GM12878 (cell line): ENCODE measurements at regions of chr2 and their contacts with region 1.

Region 1: DNA sequence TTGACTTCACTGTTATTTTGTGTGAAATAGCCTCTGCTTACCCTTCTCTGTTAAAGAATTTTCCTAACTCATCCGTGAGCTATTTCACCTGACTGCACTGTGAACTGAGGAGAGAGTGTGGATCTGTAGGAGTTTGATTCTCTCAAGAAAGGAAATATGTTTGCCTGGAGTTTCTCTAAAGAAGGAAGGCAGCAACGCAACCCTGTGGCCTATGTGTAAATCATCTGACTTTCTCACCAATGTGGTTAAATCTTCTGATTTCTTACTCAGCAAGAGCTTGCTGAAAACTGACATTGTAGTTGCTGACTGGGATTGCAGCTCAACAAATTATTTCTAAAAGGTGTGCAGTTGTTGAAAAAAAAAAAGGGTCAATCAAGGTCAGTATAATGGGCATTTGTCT is 153.9 kb upstream of the PELI1 start:
- DNase-seq: no peak
- ATAC-seq: no peak
- H3K4me3 ChIP-seq: no peak overlapping the region
- H3K27ac ChIP-seq: no peak overlapping the region
- H3K4me1 ChIP-seq: peaks cover 14% of the 10 kb centered on the region
- H3K27me3 ChIP-seq: no peaks in the 10 kb centered on the region
- CTCF ChIP-seq: no peak
- EP300 ChIP-seq: no peak
- POLR2A ChIP-seq: no peak
- RAD21 ChIP-seq: no peak

Region 2: GRCh38 chr2:64260817-64261216 is 37.3 kb before region 1 on chr2:
- CTCF ChIA-PET with region 1: interaction called, 4 read pairs
- POLR2A ChIA-PET with region 1: interaction called, 6 read pairs
- RAD21 ChIA-PET with region 1: interaction called, 7 read pairs
- SMC1A ChIA-PET with region 1: interaction called, 13 read pairs
- in situ Hi-C with region 1: no loop called
- intact Hi-C with region 1: no loop called
- DNase-seq: peak; percentile 75
- ATAC-seq: peak; percentile 99
- H3K4me3 ChIP-seq: peak overlapping the region; percentile 31; the same call in 1 of the 2 replicates
- H3K27ac ChIP-seq: peak overlapping the region; percentile 75
- H3K4me1 ChIP-seq: peaks cover 10% of the 10 kb centered on the region
- H3K27me3 ChIP-seq: no peaks in the 10 kb centered on the region
- CTCF ChIP-seq: no peak
- EP300 ChIP-seq: peak; percentile 35 to 77; a peak in 3 of 4 replicates
- POLR2A ChIP-seq: no peak
- RAD21 ChIP-seq: no peak

Region 3: GRCh38 chr2:64318476-64318748 is 20.3 kb after region 1 on chr2:
- CTCF ChIA-PET with region 1: interaction called, 77 read pairs
- POLR2A ChIA-PET with region 1: interaction called, 8 read pairs
- RAD21 ChIA-PET with region 1: interaction called, 157 read pairs
- SMC1A ChIA-PET with region 1: interaction called, 168 read pairs
- in situ Hi-C with region 1: no loop called
- intact Hi-C with region 1: no loop called
- DNase-seq: no peak
- ATAC-seq: peak; percentile 83
- H3K4me3 ChIP-seq: no peak overlapping the region
- H3K27ac ChIP-seq: no peak overlapping the region
- H3K4me1 ChIP-seq: peaks cover 13% of the 10 kb centered on the region
- H3K27me3 ChIP-seq: no peaks in the 10 kb centered on the region
- CTCF ChIP-seq: no peak
- EP300 ChIP-seq: 0 out of 4 replicates have a peak, but pooled peaks of 1 of the 2 experiments have one; percentile 13
- POLR2A ChIP-seq: no peak
- RAD21 ChIP-seq: no peak